Adrenal gland (tissue), 19 donors: ENCODE measurements at regions of chr4 and their contacts with region 1.

Region 1: GRCh38 chr4:167021545-167022155 is 212.6 kb downstream of the SPOCK3 start:
- DNase-seq: peak; percentile 43 to 90 (median 69)
- H3K4me3 ChIP-seq: no peak overlapping the region
- H3K27ac ChIP-seq: no peak overlapping the region
- H3K4me1 ChIP-seq: no peaks in the 10 kb centered on the region
- H3K27me3 ChIP-seq: no peaks in the 10 kb centered on the region
- CTCF ChIP-seq: peak; percentile 53 to 93 (median 68)
- POLR2A ChIP-seq: no peak

Region 2: GRCh38 chr4:168076989-168077725 is 1055.5 kb after region 1 on chr4:
- intact Hi-C with region 1: loop called in 1 of 2 experiments (anchors 5 kb)
- DNase-seq: peak; percentile 47 to 84 (median 68)
- H3K4me3 ChIP-seq: no peak overlapping the region
- H3K27ac ChIP-seq: no peak overlapping the region
- H3K4me1 ChIP-seq: no peaks in the 10 kb centered on the region
- H3K27me3 ChIP-seq: no peaks in the 10 kb centered on the region
- CTCF ChIP-seq: peak; percentile 62 to 85 (median 72)
- POLR2A ChIP-seq: no peak